CD8-positive, alpha-beta memory T cell (primary cell): ENCODE measurements at regions of chr15 and their contacts with region 1.

Region 1: DNA sequence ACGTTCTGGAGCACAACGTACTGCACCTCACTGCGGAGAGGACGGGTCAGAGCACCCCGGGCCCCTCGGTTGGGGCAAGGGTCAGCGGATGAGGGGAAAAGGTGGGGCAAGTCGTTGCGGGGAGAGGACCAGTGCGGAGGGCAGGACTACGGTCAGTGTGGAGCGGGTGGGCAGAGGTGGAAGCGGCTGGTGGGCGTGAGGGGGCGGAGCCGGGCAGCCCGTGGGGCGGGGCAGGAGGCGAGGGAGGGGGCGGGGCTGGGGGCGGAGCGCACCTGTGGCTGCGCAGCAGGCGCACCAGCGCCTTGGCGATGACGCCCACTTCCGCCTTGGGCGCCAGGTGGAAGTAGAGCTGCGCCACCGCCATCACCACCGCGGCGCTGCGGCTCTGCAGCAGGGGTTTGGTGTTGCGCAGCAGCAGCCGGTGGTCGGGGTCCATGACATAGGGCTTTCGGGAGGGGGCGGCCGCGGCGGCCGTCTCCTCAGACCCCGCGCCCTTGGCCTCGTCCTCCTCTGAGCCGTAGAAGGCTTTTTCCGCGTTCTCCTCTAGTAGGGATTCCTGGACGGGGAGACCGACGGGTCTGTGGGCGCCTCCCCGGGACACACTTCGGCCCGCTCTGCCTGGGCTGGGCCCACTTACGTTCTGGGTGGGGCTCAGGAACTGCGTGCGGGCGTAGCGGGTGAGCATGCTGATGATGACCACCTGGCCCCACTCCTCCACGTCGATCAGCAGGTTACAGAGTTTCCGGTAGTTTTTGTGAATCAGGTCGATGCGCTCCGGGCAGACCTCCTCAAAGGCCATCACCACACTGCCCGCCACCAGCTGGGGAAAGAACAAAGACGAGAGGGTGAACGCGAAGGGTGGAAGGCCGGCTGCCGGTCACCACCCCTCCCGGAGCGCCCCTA is 29.2 kb downstream of the AP3B2 start:
- DNase-seq: peak; percentile 60 to 89 (median 80)
- H3K4me3 ChIP-seq: peak overlapping the region; percentile 65
- H3K4me3 Mint-ChIP-seq: peak overlapping the region; percentile 90 to 95 (median 91)
- H3K27ac ChIP-seq: peak overlapping the region; percentile 71
- H3K27ac Mint-ChIP-seq: peak overlapping the region; percentile 85 to 98 (median 91)
- H3K4me1 ChIP-seq: peaks cover 8% of the 10 kb centered on the region
- H3K4me1 Mint-ChIP-seq: peaks cover 9 to 15% (median 14%) of the 10 kb centered on the region in 3 donors
- H3K27me3 ChIP-seq: no peaks in the 10 kb centered on the region
- H3K27me3 Mint-ChIP-seq: peaks cover 0 to 8% of the 10 kb centered on the region in 2 donors

Region 2: GRCh38 chr15:82585072-82585471 is 95.4 kb before region 1 on chr15:
- CTCF ChIA-PET with region 1: no interaction called
- POLR2A ChIA-PET with region 1: no interaction called
- DNase-seq: no peak
- H3K4me3 ChIP-seq: no peak overlapping the region
- H3K4me3 Mint-ChIP-seq: no peak overlapping the region
- H3K27ac ChIP-seq: no peak overlapping the region
- H3K27ac Mint-ChIP-seq: no peak overlapping the region
- H3K4me1 ChIP-seq: no peaks in the 10 kb centered on the region
- H3K4me1 Mint-ChIP-seq: no peaks in the 10 kb centered on the region
- H3K27me3 ChIP-seq: no peaks in the 10 kb centered on the region
- H3K27me3 Mint-ChIP-seq: peaks cover 14 to 37% of the 10 kb centered on the region in 2 donors

Region 3: DNA sequence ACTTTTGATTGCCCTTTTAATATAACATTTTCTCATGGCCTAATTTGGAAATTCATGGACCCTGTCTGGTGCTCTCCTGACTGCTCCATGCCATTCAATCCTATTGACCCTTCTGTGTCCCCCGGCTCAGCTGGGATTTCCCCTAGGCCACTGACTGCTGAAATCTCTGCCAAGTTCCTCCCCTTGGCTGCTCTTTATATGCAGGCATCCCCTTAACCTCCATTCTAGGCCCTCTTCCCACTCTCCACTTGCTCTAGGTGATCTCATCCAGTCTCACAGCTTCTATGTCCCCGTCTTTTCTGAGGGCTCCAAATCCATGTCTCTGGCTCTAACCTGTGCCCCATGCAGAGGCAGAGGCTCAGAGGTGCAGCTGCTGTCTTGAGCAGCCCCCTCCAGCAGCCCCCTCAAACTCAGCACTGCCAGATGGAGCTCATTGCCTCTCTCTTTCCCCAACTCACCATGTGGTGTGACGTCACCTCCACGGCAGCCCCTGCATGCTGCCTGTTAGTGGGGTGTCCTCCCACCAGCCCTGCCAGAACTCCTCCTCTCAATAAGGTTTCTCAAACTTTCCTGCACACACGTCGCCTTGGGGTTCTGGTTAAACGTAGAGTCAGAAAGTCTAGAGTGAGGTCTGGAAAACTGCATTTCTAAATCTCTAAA is 118.9 kb after region 1 on chr15:
- CTCF ChIA-PET with region 1: no interaction called
- POLR2A ChIA-PET with region 1: no interaction called
- DNase-seq: no peak
- H3K4me3 ChIP-seq: no peak overlapping the region
- H3K4me3 Mint-ChIP-seq: no peak overlapping the region
- H3K27ac ChIP-seq: no peak overlapping the region
- H3K27ac Mint-ChIP-seq: no peak overlapping the region
- H3K4me1 ChIP-seq: no peaks in the 10 kb centered on the region
- H3K4me1 Mint-ChIP-seq: no peaks in the 10 kb centered on the region
- H3K27me3 ChIP-seq: no peaks in the 10 kb centered on the region
- H3K27me3 Mint-ChIP-seq: peaks cover 16 to 70% of the 10 kb centered on the region in 2 donors

Region 4: GRCh38 chr15:82809404-82810060 is 129.1 kb after region 1 on chr15 and contains the start of gene WHAMM:
- CTCF ChIA-PET with region 1: no interaction called
- POLR2A ChIA-PET with region 1: interaction called, 19 read pairs
- DNase-seq: peak; percentile 93 to 98 (median 96)
- H3K4me3 ChIP-seq: peak within 1 kb of the TSS; percentile 68
- H3K4me3 Mint-ChIP-seq: peak within 1 kb of the TSS; percentile 88 to 96 (median 95)
- H3K27ac ChIP-seq: peak within 1 kb of the TSS; percentile 91
- H3K27ac Mint-ChIP-seq: peak within 1 kb of the TSS; percentile 93 to 100 (median 98)
- H3K4me1 ChIP-seq: peaks cover 27% of the 10 kb centered on the region
- H3K4me1 Mint-ChIP-seq: peaks cover 34 to 39% (median 38%) of the 10 kb centered on the region in 3 donors
- H3K27me3 ChIP-seq: no peaks in the 10 kb centered on the region
- H3K27me3 Mint-ChIP-seq: peaks cover 0 to 3% of the 10 kb centered on the region in 2 donors
- total RNA-seq, gene WHAMM: 9.3 to 9.7 TPM